GM10248 (cell line): ENCODE measurements at regions of chr16 and their contacts with region 1.

Region 1: GRCh38 chr16:67017810-67018488 is 11.0 kb upstream of the CBFB start:
- DNase-seq: peak; percentile 83
- CTCF ChIP-seq: peak; percentile 86

Region 2: GRCh38 chr16:66894948-66895688 is 122.8 kb before region 1 on chr16:
- CTCF ChIA-PET with region 1: interaction called, 13 read pairs
- POLR2A ChIA-PET with region 1: no interaction called
- DNase-seq: peak; percentile 78
- CTCF ChIP-seq: peak; percentile 87

Region 3: DNA sequence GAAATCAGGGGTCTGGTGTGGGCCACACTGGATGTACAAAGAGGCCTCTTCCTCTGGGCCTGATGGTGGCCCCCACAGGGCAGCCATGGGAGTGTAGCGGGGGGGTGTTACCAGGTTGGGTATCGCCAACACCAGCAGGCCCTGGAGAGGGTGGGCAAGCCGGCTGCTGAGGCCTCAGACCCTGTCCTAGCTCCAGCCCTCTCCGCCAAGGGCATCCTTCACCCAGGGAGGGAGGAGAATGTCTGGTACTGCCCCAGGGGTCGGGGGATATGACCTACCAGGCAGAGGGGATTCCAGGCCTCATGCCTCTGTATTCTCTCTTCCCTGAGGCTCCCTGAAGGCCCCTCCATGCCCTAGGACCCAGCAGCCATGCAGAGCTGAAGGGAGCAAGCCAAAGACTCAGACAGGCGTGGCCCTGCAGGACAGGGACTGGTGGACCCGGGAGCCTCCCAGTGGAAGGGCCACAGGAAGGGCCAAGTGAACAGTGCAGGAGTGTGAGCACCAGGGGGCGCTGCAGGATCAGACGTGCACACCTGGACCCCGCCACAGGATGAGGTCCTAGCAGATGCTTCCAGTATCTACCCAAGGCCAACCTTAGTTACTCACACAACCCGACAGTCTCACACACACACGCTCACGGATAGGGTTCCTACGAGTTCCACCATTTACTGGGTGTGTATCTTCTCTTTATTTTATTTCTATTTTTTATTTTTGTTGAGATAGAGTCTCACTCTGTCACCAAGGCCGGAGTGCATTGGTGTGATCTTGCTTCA is 40.4 kb before region 1 on chr16:
- CTCF ChIA-PET with region 1: interaction called, 16 read pairs
- POLR2A ChIA-PET with region 1: no interaction called
- DNase-seq: peak; percentile 90
- CTCF ChIP-seq: peak; percentile 93

Region 4: DNA sequence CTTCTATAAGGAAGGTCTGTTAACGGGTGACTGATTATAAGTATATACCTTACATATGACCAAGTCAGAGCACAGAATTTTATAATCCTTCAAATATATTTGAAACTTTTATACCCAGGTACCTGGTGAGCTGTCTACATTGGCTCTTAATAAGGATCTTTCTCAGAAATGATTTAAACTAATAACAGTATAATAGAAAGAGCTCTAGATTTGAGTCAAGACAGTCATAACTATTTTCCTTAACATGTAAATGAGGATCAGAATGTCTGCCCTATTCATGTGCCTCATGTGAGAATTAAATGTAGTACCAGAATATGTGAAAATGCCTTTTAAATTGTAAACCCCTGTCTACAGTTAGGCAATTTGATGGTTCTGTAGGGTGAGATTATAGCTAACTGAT is 25.5 kb after region 1 on chr16:
- CTCF ChIA-PET with region 1: interaction called, 19 read pairs
- POLR2A ChIA-PET with region 1: no interaction called
- DNase-seq: no peak
- CTCF ChIP-seq: no peak

Region 5: DNA sequence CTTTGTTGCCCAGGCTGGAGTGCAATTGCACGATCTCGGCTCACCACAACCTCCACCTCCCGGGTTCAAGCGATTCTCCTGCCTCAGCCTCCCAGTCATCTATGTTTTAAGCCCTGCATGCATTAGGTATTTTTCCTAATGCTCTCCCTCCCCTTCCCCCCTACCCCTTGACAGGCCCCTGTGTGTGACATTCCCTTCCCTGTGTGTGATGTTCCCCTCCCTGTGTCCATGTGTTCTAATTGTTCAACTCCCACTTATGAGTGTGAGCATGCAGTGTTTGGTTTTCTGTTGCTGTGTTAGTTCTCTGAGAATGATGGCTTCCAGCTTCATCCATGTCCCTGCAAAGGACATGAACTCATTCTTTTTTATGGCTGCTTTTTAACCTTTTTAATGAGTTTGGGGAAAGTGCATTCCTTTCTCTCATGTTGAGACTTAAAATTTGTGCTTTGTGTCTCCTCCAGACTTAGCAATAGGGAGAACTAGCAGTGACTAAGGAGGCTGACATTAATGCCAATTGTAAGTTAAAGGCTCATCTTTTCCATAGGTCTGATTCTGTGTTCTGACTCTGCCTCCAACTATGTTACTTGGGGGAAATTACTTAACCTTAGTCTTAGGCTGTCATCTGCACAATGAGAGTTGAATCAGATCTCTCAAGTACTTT is 74.1 kb after region 1 on chr16:
- CTCF ChIA-PET with region 1: interaction called, 12 read pairs
- POLR2A ChIA-PET with region 1: interaction called, 4 read pairs
- DNase-seq: no peak
- CTCF ChIP-seq: no peak

Region 6: GRCh38 chr16:67137605-67138004 is 119.7 kb after region 1 on chr16:
- CTCF ChIA-PET with region 1: interaction called, 14 read pairs
- POLR2A ChIA-PET with region 1: interaction called, 4 read pairs
- DNase-seq: no peak
- CTCF ChIP-seq: no peak

Region 7: DNA sequence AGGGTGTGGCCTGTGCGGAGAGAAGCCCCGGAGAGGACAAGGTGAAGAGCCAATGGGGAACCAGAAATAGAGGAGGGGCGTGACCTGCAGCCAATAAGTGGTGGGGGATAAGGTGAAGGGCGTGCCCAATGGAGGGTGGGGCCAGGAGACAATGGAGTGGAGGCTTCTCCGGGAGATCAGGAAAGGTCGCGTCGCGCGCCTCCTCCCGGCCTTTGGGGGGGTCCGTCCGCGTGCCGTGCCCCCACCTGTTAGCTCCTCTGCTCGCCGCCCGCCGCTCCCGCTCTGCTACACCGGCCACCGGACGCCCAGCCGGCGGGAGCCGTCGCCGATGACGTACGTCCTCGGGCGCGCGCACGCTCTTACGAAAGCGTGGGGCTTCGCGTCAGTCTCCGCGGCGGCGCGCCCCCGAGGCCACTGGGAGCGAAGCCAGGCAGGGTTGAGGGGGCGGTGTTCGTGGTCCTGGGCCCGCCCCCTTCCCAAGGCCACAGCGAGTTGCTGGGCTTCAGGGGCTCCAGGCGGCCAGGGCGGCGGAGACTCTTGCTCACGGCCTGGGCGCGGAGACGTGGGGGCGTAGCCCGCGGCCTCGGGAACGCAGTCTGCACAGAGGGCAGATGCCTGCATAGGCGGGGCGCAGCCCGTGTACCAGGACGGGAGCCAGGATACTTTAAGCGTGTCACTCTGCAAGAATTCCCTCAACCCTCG is 165.8 kb after region 1 on chr16 and contains the start of gene MATCAP1:
- CTCF ChIA-PET with region 1: interaction called, 45 read pairs
- POLR2A ChIA-PET with region 1: no interaction called
- DNase-seq: peak; percentile 99
- CTCF ChIP-seq: no peak